A673 (cell line): ENCODE measurements at regions of chr12 and their contacts with region 1.

Region 1: GRCh38 chr12:25014961-25015360 is 66.1 kb upstream of the BCAT1 start:
- DNase-seq: no peak
- H3K4me3 ChIP-seq: no peak overlapping the region
- H3K27ac ChIP-seq: no peak overlapping the region
- H3K4me1 ChIP-seq: no peaks in the 10 kb centered on the region
- H3K27me3 ChIP-seq: no peaks in the 10 kb centered on the region
- CTCF ChIP-seq: no peak

Region 2: GRCh38 chr12:24719293-24719721 is 295.7 kb before region 1 on chr12:
- CTCF ChIA-PET with region 1: no interaction called
- POLR2A ChIA-PET with region 1: no interaction called
- intact Hi-C with region 1: no loop called
- DNase-seq: peak; percentile 35
- H3K4me3 ChIP-seq: no peak overlapping the region
- H3K27ac ChIP-seq: no peak overlapping the region
- H3K4me1 ChIP-seq: no peaks in the 10 kb centered on the region
- H3K27me3 ChIP-seq: no peaks in the 10 kb centered on the region
- CTCF ChIP-seq: no peak

Region 3: GRCh38 chr12:24911271-24911791 is 103.6 kb before region 1 on chr12:
- CTCF ChIA-PET with region 1: no interaction called
- POLR2A ChIA-PET with region 1: interaction called, 16 read pairs
- intact Hi-C with region 1: no loop called
- DNase-seq: no peak
- H3K4me3 ChIP-seq: no peak overlapping the region
- H3K27ac ChIP-seq: no peak overlapping the region
- H3K4me1 ChIP-seq: peaks cover 11% of the 10 kb centered on the region
- H3K27me3 ChIP-seq: no peaks in the 10 kb centered on the region
- CTCF ChIP-seq: no peak